Activated CD8-positive, alpha-beta T cell treated with anti-CD3 and anti-CD28 coated beads, Interleukin-2, amount 10 ng/mL, durations not matched to agents 7 days and 5 days (primary cell): ENCODE measurements at regions of chr16 and their contacts with region 1.

Region 1: DNA sequence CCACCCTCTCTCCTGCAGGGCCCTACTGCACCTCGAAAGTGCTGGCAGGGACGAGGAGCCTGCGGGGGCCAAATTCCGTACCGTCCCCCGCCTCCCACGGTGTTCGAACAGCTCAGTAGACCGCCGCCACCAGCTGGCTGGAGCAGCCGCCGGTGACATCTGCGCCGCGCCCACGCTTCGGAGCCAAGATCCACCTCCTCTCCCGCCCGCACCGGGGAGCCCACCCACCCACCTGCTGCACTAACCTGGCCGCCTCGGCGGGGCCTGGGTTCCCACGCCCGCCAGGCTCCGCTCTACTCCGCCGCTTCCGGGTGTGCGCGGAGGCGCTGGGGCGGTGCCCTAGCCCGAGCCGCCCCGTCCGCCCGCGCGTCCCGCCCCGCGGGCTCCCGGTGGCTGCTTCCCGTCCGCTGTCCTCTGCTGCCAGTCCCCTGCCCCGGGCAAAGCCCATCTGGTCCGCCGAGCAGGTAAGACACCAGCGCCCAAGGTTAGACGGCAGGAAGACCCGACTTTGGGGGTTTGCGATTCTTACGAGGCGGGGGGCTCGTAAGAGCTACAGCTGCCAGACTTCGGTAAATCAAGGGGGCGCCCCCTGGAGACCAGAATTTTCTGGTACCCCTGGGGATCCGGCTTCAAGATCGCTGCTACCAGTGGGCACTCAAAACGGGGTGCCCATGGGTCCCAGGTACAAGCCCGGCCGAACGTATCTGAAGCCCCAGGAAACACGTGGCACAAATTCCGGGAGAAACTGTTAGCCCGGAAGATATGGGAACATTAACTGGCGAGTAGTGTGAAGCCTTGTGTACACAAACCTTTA is at the starts of genes FBXL8 and TRADD:
- DNase-seq: peak; percentile 86
- ATAC-seq: peak; percentile 73
- H3K4me3 Mint-ChIP-seq: peak within 1 kb of the TSS; percentile 96
- H3K27ac Mint-ChIP-seq: peak within 1 kb of the TSS; percentile 94
- H3K4me1 Mint-ChIP-seq: peaks cover 73% of the 10 kb centered on the region
- H3K27me3 Mint-ChIP-seq: peaks cover 15% of the 10 kb centered on the region
- total RNA-seq, gene FBXL8: 22.7 to 24.8 TPM
- total RNA-seq, gene TRADD: 39.2 to 40.7 TPM

Region 2: GRCh38 chr16:66947302-66948065 is 212.3 kb before region 1 on chr16:
- CTCF ChIA-PET with region 1: interaction called, 18 read pairs
- POLR2A ChIA-PET with region 1: no interaction called
- DNase-seq: peak; percentile 91
- ATAC-seq: peak; percentile 90
- H3K4me3 Mint-ChIP-seq: peak overlapping the region; percentile 81
- H3K27ac Mint-ChIP-seq: no peak overlapping the region
- H3K4me1 Mint-ChIP-seq: peaks cover 23% of the 10 kb centered on the region
- H3K27me3 Mint-ChIP-seq: peaks cover 36% of the 10 kb centered on the region

Region 3: DNA sequence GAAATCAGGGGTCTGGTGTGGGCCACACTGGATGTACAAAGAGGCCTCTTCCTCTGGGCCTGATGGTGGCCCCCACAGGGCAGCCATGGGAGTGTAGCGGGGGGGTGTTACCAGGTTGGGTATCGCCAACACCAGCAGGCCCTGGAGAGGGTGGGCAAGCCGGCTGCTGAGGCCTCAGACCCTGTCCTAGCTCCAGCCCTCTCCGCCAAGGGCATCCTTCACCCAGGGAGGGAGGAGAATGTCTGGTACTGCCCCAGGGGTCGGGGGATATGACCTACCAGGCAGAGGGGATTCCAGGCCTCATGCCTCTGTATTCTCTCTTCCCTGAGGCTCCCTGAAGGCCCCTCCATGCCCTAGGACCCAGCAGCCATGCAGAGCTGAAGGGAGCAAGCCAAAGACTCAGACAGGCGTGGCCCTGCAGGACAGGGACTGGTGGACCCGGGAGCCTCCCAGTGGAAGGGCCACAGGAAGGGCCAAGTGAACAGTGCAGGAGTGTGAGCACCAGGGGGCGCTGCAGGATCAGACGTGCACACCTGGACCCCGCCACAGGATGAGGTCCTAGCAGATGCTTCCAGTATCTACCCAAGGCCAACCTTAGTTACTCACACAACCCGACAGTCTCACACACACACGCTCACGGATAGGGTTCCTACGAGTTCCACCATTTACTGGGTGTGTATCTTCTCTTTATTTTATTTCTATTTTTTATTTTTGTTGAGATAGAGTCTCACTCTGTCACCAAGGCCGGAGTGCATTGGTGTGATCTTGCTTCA is 182.3 kb before region 1 on chr16:
- CTCF ChIA-PET with region 1: interaction called, 95 read pairs
- POLR2A ChIA-PET with region 1: interaction called, 4 read pairs
- DNase-seq: peak; percentile 94
- ATAC-seq: peak; percentile 99
- H3K4me3 Mint-ChIP-seq: no peak overlapping the region
- H3K27ac Mint-ChIP-seq: peak overlapping the region; percentile 73
- H3K4me1 Mint-ChIP-seq: peaks cover 60% of the 10 kb centered on the region
- H3K27me3 Mint-ChIP-seq: no peaks in the 10 kb centered on the region

Region 4: DNA sequence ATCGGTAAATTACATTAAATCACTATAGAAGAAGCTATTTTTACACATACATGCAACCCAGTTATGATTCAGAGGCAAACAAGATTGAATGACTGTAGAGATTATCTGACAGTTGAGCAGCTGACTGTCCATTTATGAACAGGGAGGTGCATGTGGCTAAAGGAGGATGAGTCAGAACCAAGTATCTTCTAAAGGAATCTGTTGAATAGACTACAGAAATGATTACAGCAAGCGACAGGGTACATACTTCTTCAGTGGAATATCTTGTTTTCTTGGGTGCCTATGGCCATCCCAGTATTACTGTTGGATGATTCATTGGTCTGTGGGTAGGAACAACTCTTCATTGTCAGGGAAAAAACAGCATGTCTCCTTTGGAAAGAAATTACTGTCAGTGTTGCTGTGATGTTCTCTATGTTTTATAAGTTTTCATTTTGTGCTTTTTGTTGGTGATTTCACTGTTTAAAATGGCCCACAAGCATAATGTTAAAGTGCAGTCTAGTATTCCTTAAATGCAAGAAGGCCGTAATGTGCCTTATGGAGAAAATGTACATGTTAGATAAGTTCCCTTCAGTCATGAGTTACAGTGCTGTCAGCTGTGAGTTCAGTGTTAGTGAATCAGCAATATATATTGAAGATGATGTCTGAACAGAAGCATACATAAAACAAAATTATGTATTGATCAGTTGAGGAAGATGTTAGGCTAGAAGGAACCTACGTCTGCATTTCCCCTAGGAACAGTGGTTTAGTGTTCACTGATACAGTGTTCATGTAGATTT is 103.9 kb before region 1 on chr16:
- CTCF ChIA-PET with region 1: interaction called, 13 read pairs
- POLR2A ChIA-PET with region 1: no interaction called
- DNase-seq: no peak
- ATAC-seq: no peak
- H3K4me3 Mint-ChIP-seq: no peak overlapping the region
- H3K27ac Mint-ChIP-seq: peak overlapping the region; percentile 61
- H3K4me1 Mint-ChIP-seq: peaks cover 52% of the 10 kb centered on the region
- H3K27me3 Mint-ChIP-seq: no peaks in the 10 kb centered on the region

Region 5: GRCh38 chr16:67141426-67141825 is 18.4 kb before region 1 on chr16:
- CTCF ChIA-PET with region 1: interaction called, 22 read pairs
- POLR2A ChIA-PET with region 1: interaction called, 4 read pairs
- DNase-seq: no peak
- ATAC-seq: no peak
- H3K4me3 Mint-ChIP-seq: no peak overlapping the region
- H3K27ac Mint-ChIP-seq: no peak overlapping the region
- H3K4me1 Mint-ChIP-seq: no peaks in the 10 kb centered on the region
- H3K27me3 Mint-ChIP-seq: no peaks in the 10 kb centered on the region

Region 6: DNA sequence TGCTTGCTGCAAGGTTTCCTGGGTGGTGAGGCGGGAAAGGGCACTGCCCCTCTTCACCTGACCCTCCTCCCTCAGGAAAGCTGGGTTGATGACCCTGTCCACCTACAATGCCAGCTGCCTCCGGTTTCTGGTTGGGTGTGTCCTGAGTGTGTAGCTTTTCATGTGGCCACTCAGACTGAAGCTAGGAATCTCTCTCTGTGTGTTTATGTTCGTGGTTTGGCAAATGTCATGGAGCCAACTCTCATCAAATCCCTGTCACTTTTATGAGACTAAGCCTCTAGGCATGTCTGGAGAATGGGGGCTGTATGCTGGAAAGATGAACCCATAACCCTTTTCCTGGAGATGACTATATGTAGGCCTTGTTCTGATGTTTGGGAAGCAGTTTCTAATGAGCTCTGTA is 136.6 kb after region 1 on chr16:
- CTCF ChIA-PET with region 1: no interaction called
- POLR2A ChIA-PET with region 1: no interaction called
- DNase-seq: no peak
- ATAC-seq: no peak
- H3K4me3 Mint-ChIP-seq: no peak overlapping the region
- H3K27ac Mint-ChIP-seq: no peak overlapping the region
- H3K4me1 Mint-ChIP-seq: no peaks in the 10 kb centered on the region
- H3K27me3 Mint-ChIP-seq: peaks cover 6% of the 10 kb centered on the region

Region 7: GRCh38 chr16:67372664-67373063 is 212.9 kb after region 1 on chr16:
- CTCF ChIA-PET with region 1: no interaction called
- POLR2A ChIA-PET with region 1: no interaction called
- DNase-seq: no peak
- ATAC-seq: no peak
- H3K4me3 Mint-ChIP-seq: no peak overlapping the region
- H3K27ac Mint-ChIP-seq: no peak overlapping the region
- H3K4me1 Mint-ChIP-seq: no peaks in the 10 kb centered on the region
- H3K27me3 Mint-ChIP-seq: peaks cover 6% of the 10 kb centered on the region